PC-3 (cell line): ENCODE measurements at regions of chr21 and their contacts with region 1.

Region 1: GRCh38 chr21:34745557-34746255 is 76.9 kb downstream of the CLIC6 start:
- DNase-seq: peak; percentile 93
- ATAC-seq: peak; percentile 68
- H3K4me3 ChIP-seq: no peak overlapping the region
- H3K27ac ChIP-seq: no peak overlapping the region
- H3K4me1 ChIP-seq: peaks cover 31% of the 10 kb centered on the region
- H3K27me3 ChIP-seq: no peaks in the 10 kb centered on the region
- CTCF ChIP-seq: peak; percentile 97

Region 2: GRCh38 chr21:34693192-34693810 is 52.4 kb before region 1 on chr21:
- CTCF ChIA-PET with region 1: interaction called, 5 read pairs
- POLR2A ChIA-PET with region 1: no interaction called
- intact Hi-C with region 1: loop called (anchors 1 kb)
- DNase-seq: peak; percentile 83
- ATAC-seq: peak; percentile 65
- H3K4me3 ChIP-seq: no peak overlapping the region
- H3K27ac ChIP-seq: no peak overlapping the region
- H3K4me1 ChIP-seq: peaks cover 38% of the 10 kb centered on the region
- H3K27me3 ChIP-seq: no peaks in the 10 kb centered on the region
- CTCF ChIP-seq: peak; percentile 93

Region 3: GRCh38 chr21:34807146-34807880 is 61.6 kb after region 1 on chr21:
- CTCF ChIA-PET with region 1: interaction called, 11 read pairs
- POLR2A ChIA-PET with region 1: no interaction called
- intact Hi-C with region 1: no loop called
- DNase-seq: peak; percentile 89
- ATAC-seq: peak; percentile 67
- H3K4me3 ChIP-seq: peak overlapping the region; percentile 26; the same call in 1 of the 2 replicates
- H3K27ac ChIP-seq: peak overlapping the region; percentile 99
- H3K4me1 ChIP-seq: peaks cover 64% of the 10 kb centered on the region
- H3K27me3 ChIP-seq: no peaks in the 10 kb centered on the region
- CTCF ChIP-seq: 0 out of 2 replicates have a peak, but pooled peaks have one; percentile 21

Region 4: DNA sequence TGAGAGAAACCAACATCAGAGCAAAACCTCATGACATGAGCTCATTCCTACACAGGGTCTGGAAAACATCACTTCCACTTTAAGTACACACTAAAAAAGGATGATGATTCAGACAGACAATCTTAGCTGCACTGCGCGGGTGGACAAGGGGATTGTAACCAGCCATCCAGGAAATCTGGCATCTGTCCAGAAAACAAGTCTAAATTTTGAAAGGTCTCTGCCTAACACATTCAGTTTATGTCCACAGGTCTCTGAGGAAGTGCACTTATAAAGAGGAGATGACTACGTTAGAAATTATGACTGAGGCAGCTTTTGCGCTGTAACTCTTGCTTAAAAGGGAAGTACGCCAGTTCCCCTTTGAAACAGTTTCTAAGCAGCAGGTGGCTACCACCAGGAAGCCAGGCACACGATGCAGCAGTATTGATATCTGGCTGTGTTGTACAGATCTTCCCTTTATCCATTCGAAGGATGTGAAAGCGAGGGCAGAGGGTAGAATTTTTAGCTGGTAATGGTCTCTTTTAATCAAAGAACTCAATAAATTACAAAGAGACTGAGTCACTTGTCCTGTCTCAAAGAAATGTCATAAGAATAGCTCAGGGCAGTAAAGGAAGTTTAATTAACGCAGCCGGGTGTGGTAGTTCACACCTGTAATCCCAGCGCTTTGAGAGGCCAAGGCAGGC is 1186.7 kb after region 1 on chr21:
- CTCF ChIA-PET with region 1: no interaction called
- POLR2A ChIA-PET with region 1: no interaction called
- intact Hi-C with region 1: loop called (anchors 10 kb)
- DNase-seq: peak; percentile 90
- ATAC-seq: peak; percentile 85
- H3K4me3 ChIP-seq: peak overlapping the region; percentile 29; the same call in 1 of the 2 replicates
- H3K27ac ChIP-seq: peak overlapping the region; percentile 64
- H3K4me1 ChIP-seq: peaks cover 25% of the 10 kb centered on the region
- H3K27me3 ChIP-seq: no peaks in the 10 kb centered on the region
- CTCF ChIP-seq: no peak